ENCODE measurements at regions of chr11 and their contacts with region 1.

Region 1: GRCh38 chr11:75525596-75526541 is at the start of gene GDPD5:
- DNase-seq: peak; percentile 83 to 84
- ATAC-seq: peak; percentile 96
- total RNA-seq, gene GDPD5: 3.3 to 4.0 TPM

Region 2: DNA sequence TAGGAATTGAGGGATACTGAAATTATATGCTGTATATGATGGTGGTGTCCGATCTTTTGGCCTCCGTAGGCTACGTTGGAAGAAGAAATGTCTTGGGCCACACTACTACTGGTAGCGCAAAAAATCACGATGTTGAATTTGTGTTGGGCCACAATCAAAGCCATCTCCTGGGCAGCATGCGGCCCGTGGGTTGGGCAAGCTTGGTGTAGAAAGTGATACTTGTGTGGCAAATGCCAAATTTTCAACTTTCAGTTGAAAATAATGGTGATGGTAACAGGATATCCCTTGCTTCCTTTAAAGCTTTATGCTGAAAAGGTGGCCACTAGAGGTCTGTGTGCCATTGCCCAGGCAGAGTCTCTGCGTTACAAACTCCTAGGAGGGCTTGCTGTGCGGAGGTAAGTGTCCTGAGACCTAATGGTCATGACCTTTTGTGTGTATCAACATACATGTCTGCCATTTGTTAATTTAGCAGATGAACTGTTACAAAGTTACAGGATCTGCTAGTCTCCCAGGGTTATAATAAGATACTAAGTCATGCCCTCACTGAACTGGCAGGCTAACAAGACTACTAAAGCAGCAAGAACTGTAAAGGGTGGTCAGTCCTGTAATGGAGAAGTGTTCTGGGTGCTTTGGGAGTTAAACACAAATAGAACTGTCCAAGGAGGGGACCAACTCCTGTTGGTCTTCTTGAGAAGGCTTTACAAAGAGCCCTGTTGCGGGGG is 123.7 kb before region 1 on chr11:
- intact Hi-C with region 1: loop called in 1 of 2 experiments (anchors 2 kb)
- DNase-seq: no peak
- ATAC-seq: no peak

Measured in left colon (tissue), 2 donors.